Gastrocnemius medialis (tissue), 4 donors: ENCODE measurements at regions of chr17 and their contacts with region 1.

Region 1: GRCh38 chr17:20206068-20206467 is 196.9 kb downstream of the SPECC1 start:
- DNase-seq: no peak
- ATAC-seq: no peak
- H3K4me3 ChIP-seq: no peak overlapping the region
- H3K27ac ChIP-seq: no peak overlapping the region
- H3K4me1 ChIP-seq: no peaks in the 10 kb centered on the region
- H3K27me3 ChIP-seq: no peaks in the 10 kb centered on the region
- CTCF ChIP-seq: no peak
- POLR2A ChIP-seq: no peak

Region 2: DNA sequence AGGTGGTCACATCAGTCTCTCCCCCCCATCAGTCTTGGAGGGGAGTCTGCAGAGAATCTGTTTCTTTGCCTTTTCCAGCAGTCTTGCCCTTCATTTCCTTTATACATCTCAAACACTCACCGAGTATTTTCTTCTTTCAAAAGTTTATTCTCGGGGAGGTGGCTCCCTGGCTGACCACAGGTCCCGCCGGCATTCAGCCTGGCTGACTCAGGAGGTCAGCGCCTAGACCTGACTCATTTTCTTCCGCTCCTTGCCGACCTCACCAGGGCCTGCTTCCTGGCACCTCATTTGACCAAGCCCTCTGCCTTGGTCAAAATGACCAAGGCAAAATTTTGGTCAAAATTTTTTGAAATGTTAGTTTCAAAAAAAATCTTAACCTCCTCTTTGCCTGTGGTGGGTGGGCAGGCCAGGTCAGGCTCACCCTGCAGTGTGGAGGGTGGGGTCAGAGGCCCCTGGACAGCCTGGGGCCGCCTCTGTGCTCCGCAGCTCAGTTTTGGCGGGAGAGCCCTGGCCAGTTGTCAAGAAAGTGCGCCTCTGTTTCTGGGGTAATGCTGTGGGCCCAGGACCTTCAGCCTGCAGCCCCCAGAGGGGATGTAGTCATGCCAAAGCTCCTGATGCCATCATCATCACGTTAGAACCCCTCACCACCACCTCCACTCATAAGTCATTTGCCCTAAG is 31.3 kb before region 1 on chr17:
- in situ Hi-C with region 1: no loop called
- intact Hi-C with region 1: no loop called
- DNase-seq: no peak
- ATAC-seq: no peak
- H3K4me3 ChIP-seq: no peak overlapping the region
- H3K27ac ChIP-seq: no peak overlapping the region
- H3K4me1 ChIP-seq: no peaks in the 10 kb centered on the region
- H3K27me3 ChIP-seq: no peaks in the 10 kb centered on the region
- CTCF ChIP-seq: no peak
- POLR2A ChIP-seq: no peak

Region 3: GRCh38 chr17:20300436-20300934 is 94.4 kb after region 1 on chr17:
- in situ Hi-C with region 1: loop called in 1 of 4 experiments (anchors 25 kb)
- intact Hi-C with region 1: no loop called
- DNase-seq: no peak
- ATAC-seq: no peak
- H3K4me3 ChIP-seq: no peak overlapping the region
- H3K27ac ChIP-seq: no peak overlapping the region
- H3K4me1 ChIP-seq: no peaks in the 10 kb centered on the region
- H3K27me3 ChIP-seq: no peaks in the 10 kb centered on the region
- CTCF ChIP-seq: no peak
- POLR2A ChIP-seq: no peak

Region 4: DNA sequence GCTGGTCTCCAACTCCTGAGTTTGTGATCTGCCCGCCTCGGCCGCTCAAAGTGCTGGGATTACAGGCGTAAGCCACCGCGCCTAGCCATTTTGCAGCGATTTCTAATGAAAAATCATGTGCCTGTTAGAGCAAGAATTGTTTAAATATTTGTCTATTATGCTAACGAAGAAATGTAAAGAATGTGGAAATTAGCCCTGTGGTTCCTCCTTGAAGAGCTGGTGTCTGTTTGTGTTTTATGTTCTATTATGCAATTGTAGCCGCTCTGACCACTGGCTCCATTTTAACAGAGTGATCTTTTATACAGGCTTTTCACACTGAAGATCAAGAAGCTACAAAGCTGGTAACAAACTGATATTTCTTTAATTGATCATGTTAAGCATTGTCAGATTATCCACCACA is 619.5 kb after region 1 on chr17:
- in situ Hi-C with region 1: loop called in 1 of 4 experiments (anchors 25 kb)
- intact Hi-C with region 1: no loop called
- DNase-seq: no peak
- ATAC-seq: no peak
- H3K4me3 ChIP-seq: no peak overlapping the region
- H3K27ac ChIP-seq: no peak overlapping the region
- H3K4me1 ChIP-seq: no peaks in the 10 kb centered on the region
- H3K27me3 ChIP-seq: no peaks in the 10 kb centered on the region
- CTCF ChIP-seq: no peak
- POLR2A ChIP-seq: no peak